ENCODE measurements at regions of chr6 and their contacts with region 1.

Region 1: GRCh38 chr6:46325561-46326530 is 155.1 kb upstream of the ENPP5 start:
- DNase-seq: peak; percentile 44 to 86 (median 80)
- H3K4me3 ChIP-seq: peak overlapping the region; percentile 24 to 78 (median 60)
- H3K27ac ChIP-seq: peak overlapping the region; percentile 31 to 91 (median 82)
- H3K27me3 ChIP-seq: no peaks in the 10 kb centered on the region
- CTCF ChIP-seq: no peak

Region 2: GRCh38 chr6:46221222-46221793 is 104.5 kb before region 1 on chr6:
- intact Hi-C with region 1: loop called in 1 of 2 experiments (anchors 5 kb)
- DNase-seq: no peak
- H3K4me3 ChIP-seq: no peak overlapping the region
- H3K27ac ChIP-seq: peak overlapping the region in 34 of 59 donors; percentile 0 to 83 (median 31)
- H3K27me3 ChIP-seq: no peaks in the 10 kb centered on the region
- CTCF ChIP-seq: peak; percentile 52 to 99 (median 92)

Region 3: DNA sequence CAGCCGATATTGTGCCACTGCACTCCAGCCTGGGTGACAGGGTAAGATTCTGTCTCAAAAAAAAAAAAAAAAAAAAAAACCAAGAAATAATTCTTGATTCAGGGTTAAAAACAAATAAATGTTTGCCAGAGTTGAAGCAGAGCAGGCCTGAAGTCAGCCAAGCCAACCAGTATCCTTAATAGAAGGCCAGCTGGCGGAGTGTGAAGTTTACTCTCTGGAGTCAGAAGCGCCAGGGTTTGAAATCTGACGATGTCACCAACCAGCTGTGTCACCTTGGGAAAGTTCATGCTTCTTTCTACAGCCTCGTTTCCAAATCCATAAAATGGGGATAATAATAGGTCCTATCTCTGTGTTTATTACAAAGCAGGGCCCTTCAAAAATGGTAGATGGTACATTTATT is 82.1 kb before region 1 on chr6:
- intact Hi-C with region 1: loop called in 1 of 2 experiments (anchors 10 kb)
- DNase-seq: no peak
- H3K4me3 ChIP-seq: no peak overlapping the region
- H3K27ac ChIP-seq: peak overlapping the region in 22 of 59 donors; percentile 1 to 64 (median 30)
- H3K27me3 ChIP-seq: no peaks in the 10 kb centered on the region
- CTCF ChIP-seq: no peak

Region 4: DNA sequence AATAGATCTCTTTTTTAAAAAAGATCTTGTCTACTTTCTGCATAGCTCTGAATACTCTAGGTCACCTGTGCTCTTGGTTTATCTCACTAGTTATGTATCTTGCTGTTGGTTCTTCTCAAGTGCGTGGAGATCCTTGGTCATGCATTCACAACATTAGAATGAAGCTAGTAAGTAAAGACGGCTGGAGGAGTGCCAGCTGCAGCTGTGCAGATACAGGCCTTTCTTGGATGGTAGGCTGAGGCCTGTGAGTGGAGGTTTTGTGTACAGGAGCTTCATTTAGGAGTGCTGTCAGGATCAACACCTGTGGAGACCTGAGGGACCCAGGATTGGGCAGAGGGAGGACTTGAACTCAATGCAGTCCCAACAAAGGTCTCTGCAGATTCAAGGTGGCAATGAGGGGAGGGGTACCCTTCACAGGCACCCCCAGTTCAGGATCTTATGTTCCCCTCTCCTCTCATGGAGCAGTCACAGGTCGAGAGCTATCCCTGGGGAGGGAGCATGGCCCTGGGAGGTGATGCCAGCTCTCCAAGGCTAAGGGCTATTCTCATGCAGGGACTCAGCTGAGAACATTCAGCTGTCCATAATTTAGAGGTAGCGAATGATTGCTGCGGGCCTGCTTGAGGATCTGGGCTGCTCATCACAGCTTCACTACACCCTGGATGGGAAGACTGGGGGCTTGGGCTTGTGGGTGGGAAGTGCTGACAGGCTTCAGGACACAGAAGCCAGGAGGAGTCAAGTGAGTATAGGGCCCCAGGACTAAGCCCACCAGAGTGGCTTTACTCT is 56.2 kb before region 1 on chr6:
- intact Hi-C with region 1: loop called in 1 of 2 experiments (anchors 10 kb)
- DNase-seq: peak in 8 of 10 donors; percentile 41 to 78 (median 58)
- H3K4me3 ChIP-seq: no peak overlapping the region
- H3K27ac ChIP-seq: peak overlapping the region in 47 of 59 donors; percentile 0 to 72 (median 48)
- H3K27me3 ChIP-seq: no peaks in the 10 kb centered on the region
- CTCF ChIP-seq: no peak

Region 5: GRCh38 chr6:46279874-46280273 is 46.0 kb before region 1 on chr6:
- intact Hi-C with region 1: loop called (anchors 5 to 10 kb)
- DNase-seq: no peak
- H3K4me3 ChIP-seq: no peak overlapping the region
- H3K27ac ChIP-seq: peak overlapping the region in 1 of 59 donors; percentile 18
- H3K27me3 ChIP-seq: no peaks in the 10 kb centered on the region
- CTCF ChIP-seq: no peak

Region 6: DNA sequence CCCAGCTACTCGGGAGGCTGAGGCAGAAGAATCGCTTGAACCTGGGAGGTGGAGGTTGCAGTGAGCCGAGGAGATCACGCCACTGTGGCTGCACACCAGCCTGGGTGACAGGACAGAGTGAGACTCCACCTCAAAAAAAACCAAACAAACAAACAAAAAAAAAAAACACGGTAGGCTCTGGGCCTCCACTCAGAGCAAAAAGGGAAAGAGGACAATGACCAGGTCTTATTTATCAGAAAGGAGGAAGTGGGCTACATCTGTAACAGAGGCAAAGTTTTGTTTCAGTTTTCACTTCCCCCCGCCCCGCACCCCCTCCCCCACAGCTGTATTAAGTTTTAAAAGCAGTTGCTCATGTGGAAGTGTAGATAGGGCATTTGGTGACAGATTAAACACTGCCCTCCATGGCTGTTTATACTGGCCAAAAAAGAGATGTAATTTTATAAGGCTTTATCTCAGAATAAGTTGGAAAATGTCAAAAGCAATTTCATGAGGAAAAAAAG is 50.8 kb after region 1 on chr6:
- intact Hi-C with region 1: loop called in 1 of 2 experiments (anchors 5 kb)
- DNase-seq: no peak
- H3K4me3 ChIP-seq: no peak overlapping the region
- H3K27ac ChIP-seq: no peak overlapping the region
- H3K27me3 ChIP-seq: no peaks in the 10 kb centered on the region
- CTCF ChIP-seq: no peak

Region 7: DNA sequence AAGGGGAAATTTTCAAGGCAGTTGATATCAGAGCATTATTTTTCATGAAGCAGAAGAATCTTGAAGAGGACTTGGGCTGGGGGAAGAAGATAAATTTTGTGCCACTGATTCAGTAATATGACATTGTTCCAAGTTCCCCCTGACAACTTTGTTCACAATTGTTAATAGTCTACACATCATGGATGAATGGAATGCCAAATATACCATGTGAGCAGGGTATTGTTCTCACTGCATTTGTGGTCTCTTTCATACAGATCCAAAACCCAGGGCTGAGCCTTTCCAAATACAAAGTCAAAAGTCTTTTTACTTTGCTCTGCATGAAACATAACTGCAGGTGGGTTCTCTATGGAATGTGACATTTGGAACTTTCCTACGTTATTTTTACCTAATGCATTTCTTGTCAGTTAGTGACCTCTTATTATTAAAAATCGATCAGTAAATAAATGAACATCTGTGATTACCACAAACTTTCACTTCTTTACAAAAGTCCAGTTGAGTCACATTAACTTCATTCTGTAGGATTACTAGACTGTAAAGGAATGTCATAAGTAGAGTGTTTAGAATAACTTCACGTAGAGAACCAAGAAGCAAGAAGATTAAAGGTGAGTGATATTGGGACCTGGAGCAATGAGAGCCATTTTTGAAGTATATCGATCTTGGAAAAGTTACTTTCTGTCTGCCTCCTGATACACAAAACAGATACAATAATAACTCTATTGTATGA is 64.5 kb after region 1 on chr6:
- intact Hi-C with region 1: loop called in 1 of 2 experiments (anchors 5 kb)
- DNase-seq: no peak
- H3K4me3 ChIP-seq: peak overlapping the region in 38 of 59 donors; percentile 1 to 56 (median 26)
- H3K27ac ChIP-seq: peak overlapping the region; percentile 1 to 95 (median 87)
- H3K27me3 ChIP-seq: no peaks in the 10 kb centered on the region
- CTCF ChIP-seq: peak in 4 of 56 donors; percentile 6 to 32 (median 13)

Measured in dorsolateral prefrontal cortex (tissue), 120 donors.